GM12878 (cell line): ENCODE measurements at regions of chr5 and their contacts with region 1.

Region 1: GRCh38 chr5:58886315-58887207 is 303.7 kb downstream of the RAB3C start:
- DNase-seq: no peak
- ATAC-seq: peak; percentile 71
- H3K4me3 ChIP-seq: no peak overlapping the region
- H3K27ac ChIP-seq: no peak overlapping the region
- H3K4me1 ChIP-seq: no peaks in the 10 kb centered on the region; the same call in 1 of the 2 replicates
- H3K27me3 ChIP-seq: no peaks in the 10 kb centered on the region
- CTCF ChIP-seq: peak; percentile 86 to 89 (median 87)
- EP300 ChIP-seq: no peak
- POLR2A ChIP-seq: no peak
- RAD21 ChIP-seq: peak; percentile 74

Region 2: DNA sequence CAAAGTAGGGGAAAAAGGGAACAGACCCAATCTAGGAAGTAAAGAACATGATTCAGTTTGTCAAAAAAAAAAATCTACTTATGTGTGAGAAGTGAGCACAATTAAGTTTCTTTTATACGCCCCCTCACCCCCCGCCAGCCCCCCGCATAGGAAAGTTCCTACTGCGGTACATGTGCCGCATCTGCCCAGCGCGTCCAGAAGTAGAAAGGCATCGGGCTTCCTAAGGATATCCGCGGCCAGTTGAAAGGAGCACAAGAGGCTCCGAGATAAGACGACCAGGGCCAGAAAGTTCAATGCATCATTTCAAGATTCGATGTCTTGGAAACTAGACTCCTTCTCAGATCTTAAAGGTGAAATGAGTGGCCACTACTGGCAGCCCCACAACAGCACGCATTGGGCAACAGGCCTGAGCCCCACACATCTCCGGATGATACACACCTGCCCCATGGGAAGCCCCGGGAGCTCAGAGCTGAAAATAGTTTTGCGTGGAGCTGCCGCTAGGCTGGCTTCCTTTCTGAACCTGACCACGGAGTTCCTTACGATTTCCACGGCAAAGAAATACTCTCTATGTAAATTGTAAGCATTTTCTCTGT is 99.8 kb before region 1 on chr5:
- CTCF ChIA-PET with region 1: no interaction called
- POLR2A ChIA-PET with region 1: no interaction called
- RAD21 ChIA-PET with region 1: no interaction called
- SMC1A ChIA-PET with region 1: no interaction called
- in situ Hi-C with region 1: no loop called
- intact Hi-C with region 1: no loop called
- DNase-seq: no peak
- ATAC-seq: no peak
- H3K4me3 ChIP-seq: no peak overlapping the region
- H3K27ac ChIP-seq: no peak overlapping the region
- H3K4me1 ChIP-seq: no peaks in the 10 kb centered on the region
- H3K27me3 ChIP-seq: no peaks in the 10 kb centered on the region
- CTCF ChIP-seq: no peak
- EP300 ChIP-seq: no peak
- POLR2A ChIP-seq: no peak
- RAD21 ChIP-seq: no peak

Region 3: GRCh38 chr5:58871648-58872242 is 14.8 kb before region 1 on chr5:
- CTCF ChIA-PET with region 1: interaction called, 56 read pairs
- POLR2A ChIA-PET with region 1: interaction called, 7 read pairs
- RAD21 ChIA-PET with region 1: interaction called, 15 read pairs
- SMC1A ChIA-PET with region 1: interaction called, 12 read pairs
- in situ Hi-C with region 1: no loop called
- intact Hi-C with region 1: no loop called
- DNase-seq: no peak
- ATAC-seq: peak; percentile 79
- H3K4me3 ChIP-seq: no peak overlapping the region
- H3K27ac ChIP-seq: no peak overlapping the region
- H3K4me1 ChIP-seq: no peaks in the 10 kb centered on the region
- H3K27me3 ChIP-seq: no peaks in the 10 kb centered on the region
- CTCF ChIP-seq: peak; percentile 46 to 53 (median 49); a peak in 5 of 6 replicates
- EP300 ChIP-seq: no peak
- POLR2A ChIP-seq: no peak
- RAD21 ChIP-seq: peak; percentile 33

Region 4: GRCh38 chr5:58944221-58944620 is 57.7 kb after region 1 on chr5:
- CTCF ChIA-PET with region 1: interaction called, 13 read pairs
- POLR2A ChIA-PET with region 1: no interaction called
- RAD21 ChIA-PET with region 1: interaction called, 3 read pairs
- SMC1A ChIA-PET with region 1: interaction called, 4 read pairs
- in situ Hi-C with region 1: no loop called
- intact Hi-C with region 1: no loop called
- DNase-seq: no peak
- ATAC-seq: no peak
- H3K4me3 ChIP-seq: no peak overlapping the region
- H3K27ac ChIP-seq: no peak overlapping the region
- H3K4me1 ChIP-seq: no peaks in the 10 kb centered on the region
- H3K27me3 ChIP-seq: no peaks in the 10 kb centered on the region
- CTCF ChIP-seq: no peak
- EP300 ChIP-seq: no peak
- POLR2A ChIP-seq: no peak
- RAD21 ChIP-seq: no peak

Region 5: DNA sequence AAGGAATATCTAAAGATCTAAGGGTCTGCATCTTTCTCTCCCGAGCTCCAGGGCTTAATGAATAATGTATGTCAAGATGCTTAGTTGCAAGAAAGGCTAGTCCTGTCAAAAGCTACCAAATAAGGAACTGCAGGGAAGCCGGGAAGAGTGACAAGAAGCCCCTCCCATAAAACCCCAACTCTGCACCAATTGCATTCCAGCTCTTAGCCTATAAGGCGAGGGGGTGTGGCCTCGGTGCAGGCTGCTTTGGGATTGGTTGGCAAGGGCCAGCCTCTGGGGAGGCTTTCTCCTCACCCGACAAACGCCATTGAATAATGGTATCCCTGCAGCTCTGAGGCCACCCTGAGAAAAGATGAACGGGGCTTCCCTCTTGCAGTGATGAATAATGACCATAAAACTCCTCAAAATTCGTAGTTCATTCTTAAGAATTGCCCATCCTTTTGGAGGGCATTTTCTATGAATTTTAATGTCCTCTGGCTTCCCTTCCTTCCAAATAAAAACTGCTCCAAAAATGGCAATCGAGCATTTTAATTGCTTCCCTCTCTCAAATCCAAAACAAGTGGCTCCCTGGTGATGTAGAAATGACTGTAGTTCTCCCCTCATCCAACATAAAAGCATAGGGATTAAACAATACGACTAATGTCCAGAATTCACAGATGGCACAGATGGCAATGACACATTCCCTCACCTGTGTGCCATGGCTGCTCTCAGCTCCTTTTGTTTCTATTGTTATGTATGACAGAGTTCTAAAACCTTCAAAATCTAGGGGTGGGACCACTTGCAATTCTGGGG is 113.4 kb after region 1 on chr5:
- CTCF ChIA-PET with region 1: interaction called, 13 read pairs
- POLR2A ChIA-PET with region 1: no interaction called
- RAD21 ChIA-PET with region 1: interaction called, 8 read pairs
- SMC1A ChIA-PET with region 1: interaction called, 43 read pairs
- in situ Hi-C with region 1: loop called (anchors 5 kb)
- intact Hi-C with region 1: no loop called
- DNase-seq: no peak
- ATAC-seq: no peak
- H3K4me3 ChIP-seq: no peak overlapping the region
- H3K27ac ChIP-seq: no peak overlapping the region
- H3K4me1 ChIP-seq: no peaks in the 10 kb centered on the region; the same call in 1 of the 2 replicates
- H3K27me3 ChIP-seq: no peaks in the 10 kb centered on the region
- CTCF ChIP-seq: no peak
- EP300 ChIP-seq: no peak
- POLR2A ChIP-seq: no peak
- RAD21 ChIP-seq: no peak

Region 6: GRCh38 chr5:59115345-59115744 is 228.8 kb after region 1 on chr5:
- CTCF ChIA-PET with region 1: no interaction called
- POLR2A ChIA-PET with region 1: no interaction called
- RAD21 ChIA-PET with region 1: no interaction called
- SMC1A ChIA-PET with region 1: no interaction called
- in situ Hi-C with region 1: no loop called
- intact Hi-C with region 1: no loop called
- DNase-seq: no peak
- ATAC-seq: no peak
- H3K4me3 ChIP-seq: no peak overlapping the region
- H3K27ac ChIP-seq: no peak overlapping the region
- H3K4me1 ChIP-seq: no peaks in the 10 kb centered on the region
- H3K27me3 ChIP-seq: no peaks in the 10 kb centered on the region
- CTCF ChIP-seq: no peak
- EP300 ChIP-seq: no peak
- POLR2A ChIP-seq: no peak
- RAD21 ChIP-seq: no peak

Region 7: GRCh38 chr5:59152701-59153245 is 266.2 kb after region 1 on chr5:
- CTCF ChIA-PET with region 1: interaction called, 3 read pairs
- POLR2A ChIA-PET with region 1: no interaction called
- RAD21 ChIA-PET with region 1: no interaction called
- SMC1A ChIA-PET with region 1: no interaction called
- in situ Hi-C with region 1: loop called (anchors 10 kb)
- intact Hi-C with region 1: no loop called
- DNase-seq: no peak
- ATAC-seq: peak; percentile 29; the same call in 2 of the 3 replicates
- H3K4me3 ChIP-seq: no peak overlapping the region
- H3K27ac ChIP-seq: no peak overlapping the region
- H3K4me1 ChIP-seq: peaks cover 5% of the 10 kb centered on the region
- H3K27me3 ChIP-seq: no peaks in the 10 kb centered on the region; a peak in 1 of 4 replicates
- CTCF ChIP-seq: no peak
- EP300 ChIP-seq: no peak
- POLR2A ChIP-seq: no peak
- RAD21 ChIP-seq: no peak

Region 8: GRCh38 chr5:59367791-59368394 is 481.3 kb after region 1 on chr5:
- CTCF ChIA-PET with region 1: no interaction called
- POLR2A ChIA-PET with region 1: no interaction called
- RAD21 ChIA-PET with region 1: no interaction called
- SMC1A ChIA-PET with region 1: interaction called, 3 read pairs
- in situ Hi-C with region 1: loop called (anchors 10 kb)
- intact Hi-C with region 1: no loop called
- DNase-seq: no peak
- ATAC-seq: peak; percentile 74
- H3K4me3 ChIP-seq: no peak overlapping the region
- H3K27ac ChIP-seq: no peak overlapping the region
- H3K4me1 ChIP-seq: no peaks in the 10 kb centered on the region
- H3K27me3 ChIP-seq: no peaks in the 10 kb centered on the region; a peak in 1 of 4 replicates
- CTCF ChIP-seq: peak; percentile 63 to 67 (median 66)
- EP300 ChIP-seq: no peak
- POLR2A ChIP-seq: no peak
- RAD21 ChIP-seq: peak; percentile 67

Region 9: DNA sequence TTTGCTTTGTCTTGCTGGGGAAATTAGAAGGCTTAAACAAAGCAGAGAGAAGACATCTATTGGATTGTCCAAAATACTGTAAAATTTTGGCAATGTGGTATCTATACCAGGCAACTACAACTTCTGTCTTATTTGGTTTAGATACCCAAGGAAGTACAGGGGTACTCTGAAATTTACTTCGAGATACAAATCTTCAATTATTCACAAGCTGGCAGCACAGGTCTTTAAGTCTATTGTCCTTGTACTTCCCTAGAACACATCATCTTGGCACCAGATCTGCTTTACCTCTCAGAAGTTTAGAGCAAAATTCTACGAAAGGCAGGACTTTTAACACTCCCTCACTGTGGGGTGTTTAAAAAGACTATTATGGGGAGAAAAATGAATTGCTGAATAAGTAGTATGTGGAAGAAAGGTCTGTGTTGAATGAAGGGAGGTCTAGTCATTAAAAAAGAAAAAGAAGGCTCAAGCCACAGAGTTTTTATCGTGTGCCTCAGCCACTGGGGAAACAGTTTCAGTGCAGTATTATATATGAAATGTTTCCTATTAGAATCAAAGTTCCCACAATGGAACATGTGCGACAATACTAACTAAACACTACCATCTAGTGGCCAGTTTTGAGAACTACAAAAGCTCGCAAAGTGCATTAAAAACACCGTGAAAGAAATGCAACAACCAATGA is 913.2 kb after region 1 on chr5:
- CTCF ChIA-PET with region 1: interaction called, 5 read pairs
- POLR2A ChIA-PET with region 1: no interaction called
- RAD21 ChIA-PET with region 1: no interaction called
- SMC1A ChIA-PET with region 1: no interaction called
- in situ Hi-C with region 1: no loop called
- intact Hi-C with region 1: loop called (anchors 10 kb)
- DNase-seq: peak; percentile 24
- ATAC-seq: peak; percentile 79
- H3K4me3 ChIP-seq: no peak overlapping the region; the same call in 1 of the 2 replicates
- H3K27ac ChIP-seq: no peak overlapping the region
- H3K4me1 ChIP-seq: peaks cover 11% of the 10 kb centered on the region; the same call in 1 of the 2 replicates
- H3K27me3 ChIP-seq: no peaks in the 10 kb centered on the region
- CTCF ChIP-seq: peak; percentile 41 to 71 (median 58); a peak in 5 of 6 replicates
- EP300 ChIP-seq: no peak
- POLR2A ChIP-seq: no peak
- RAD21 ChIP-seq: peak; percentile 82